ENCODE measurements at regions of chr5 and their contacts with region 1.

Region 1: DNA sequence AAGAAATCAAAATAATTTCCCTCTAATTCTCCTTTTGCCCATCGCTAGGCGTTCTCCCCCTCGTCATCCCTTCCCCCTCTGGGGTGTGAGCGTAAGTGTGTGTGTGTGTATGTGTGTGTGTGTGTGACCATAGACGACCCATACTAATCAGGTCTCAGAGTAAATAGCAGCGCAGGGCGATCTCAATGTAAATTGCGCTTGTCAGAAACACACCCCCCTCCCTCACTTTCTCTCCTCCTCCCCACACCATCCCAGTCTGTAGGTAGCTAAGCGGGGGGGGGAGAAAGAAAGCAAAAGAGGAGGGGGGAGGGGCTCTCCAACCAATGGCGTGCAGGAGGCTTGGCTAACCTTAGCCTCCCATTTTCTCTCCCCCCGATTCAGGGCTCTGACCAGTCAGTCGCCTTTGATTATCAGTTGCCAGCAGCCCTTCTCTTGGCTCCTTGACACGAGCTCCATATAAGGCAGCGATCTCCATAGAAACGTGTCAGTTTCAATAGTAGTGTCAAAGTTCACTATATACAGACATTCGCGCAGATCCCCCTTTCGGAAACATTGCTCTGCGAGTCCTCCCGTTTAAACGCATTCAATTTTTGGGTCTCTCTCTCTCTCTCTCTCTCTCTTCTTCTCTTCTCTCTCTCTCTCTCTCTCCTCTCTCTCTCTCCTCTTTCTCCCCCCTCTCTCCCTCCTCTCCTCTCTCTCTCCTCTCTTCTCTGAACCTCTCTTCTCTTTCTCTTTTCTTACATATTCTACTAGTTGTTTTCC is at the start of gene NR2F1:
- DNase-seq: peak; percentile 98
- ATAC-seq: peak; percentile 55
- H3K4me3 ChIP-seq: peak within 1 kb of the TSS; percentile 70 to 85
- H3K27ac ChIP-seq: peak within 1 kb of the TSS; percentile 99
- H3K4me1 ChIP-seq: peaks cover 20 to 33% of the 10 kb centered on the region in 2 experiments
- H3K27me3 ChIP-seq: no peaks in the 10 kb centered on the region
- CTCF ChIP-seq: no peak; a peak in 1 of 6 replicates
- POLR2A ChIP-seq: no peak
- RAD21 ChIP-seq: no peak; the same call in 1 of the 2 replicates
- total RNA-seq, gene NR2F1: 51.2 TPM

Region 2: GRCh38 chr5:92909602-92909962 is 673.3 kb before region 1 on chr5:
- CTCF ChIA-PET with region 1: no interaction called
- POLR2A ChIA-PET with region 1: no interaction called
- RAD21 ChIA-PET with region 1: no interaction called
- intact Hi-C with region 1: loop called (anchors 5 kb)
- DNase-seq: no peak
- ATAC-seq: peak; percentile 82
- H3K4me3 ChIP-seq: no peak overlapping the region
- H3K27ac ChIP-seq: peak overlapping the region; percentile 68
- H3K4me1 ChIP-seq: peaks cover 26 to 36% of the 10 kb centered on the region in 2 experiments
- H3K27me3 ChIP-seq: no peaks in the 10 kb centered on the region
- CTCF ChIP-seq: peak; percentile 41 to 76 (median 73); a peak in 5 of 6 replicates
- POLR2A ChIP-seq: no peak
- RAD21 ChIP-seq: peak; percentile 60

Region 3: GRCh38 chr5:93164690-93165089 is 418.2 kb before region 1 on chr5:
- CTCF ChIA-PET with region 1: no interaction called
- POLR2A ChIA-PET with region 1: no interaction called
- RAD21 ChIA-PET with region 1: no interaction called
- intact Hi-C with region 1: loop called (anchors 5 kb)
- DNase-seq: peak; percentile 87
- ATAC-seq: 0 out of 2 replicates have a peak, but pooled peaks have one; percentile 28
- H3K4me3 ChIP-seq: no peak overlapping the region
- H3K27ac ChIP-seq: peak overlapping the region; percentile 95
- H3K4me1 ChIP-seq: peaks cover 55 to 62% of the 10 kb centered on the region in 2 experiments
- H3K27me3 ChIP-seq: no peaks in the 10 kb centered on the region
- CTCF ChIP-seq: no peak
- POLR2A ChIP-seq: no peak
- RAD21 ChIP-seq: peak; percentile 28

Region 4: GRCh38 chr5:93385655-93386054 is 197.2 kb before region 1 on chr5:
- CTCF ChIA-PET with region 1: no interaction called
- POLR2A ChIA-PET with region 1: no interaction called
- RAD21 ChIA-PET with region 1: no interaction called
- intact Hi-C with region 1: no loop called
- DNase-seq: no peak
- ATAC-seq: no peak
- H3K4me3 ChIP-seq: no peak overlapping the region
- H3K27ac ChIP-seq: no peak overlapping the region
- H3K4me1 ChIP-seq: no peaks in the 10 kb centered on the region
- H3K27me3 ChIP-seq: no peaks in the 10 kb centered on the region
- CTCF ChIP-seq: no peak
- POLR2A ChIP-seq: no peak
- RAD21 ChIP-seq: no peak

Region 5: GRCh38 chr5:93800988-93801811 is 218.3 kb after region 1 on chr5:
- CTCF ChIA-PET with region 1: interaction called, 27 read pairs
- POLR2A ChIA-PET with region 1: interaction called, 4 read pairs
- RAD21 ChIA-PET with region 1: interaction called in 1 of 2 experiments, 13 read pairs
- intact Hi-C with region 1: loop called (anchors 1 kb)
- DNase-seq: peak; percentile 66
- ATAC-seq: peak; percentile 89
- H3K4me3 ChIP-seq: peak overlapping the region; percentile 4 to 9; a peak in 1 of 4 replicates
- H3K27ac ChIP-seq: peak overlapping the region; percentile 56
- H3K4me1 ChIP-seq: peaks cover 14 to 24% of the 10 kb centered on the region in 2 experiments
- H3K27me3 ChIP-seq: no peaks in the 10 kb centered on the region
- CTCF ChIP-seq: peak; percentile 59 to 72 (median 66); a peak in 5 of 6 replicates
- POLR2A ChIP-seq: no peak
- RAD21 ChIP-seq: peak; percentile 88

Region 6: DNA sequence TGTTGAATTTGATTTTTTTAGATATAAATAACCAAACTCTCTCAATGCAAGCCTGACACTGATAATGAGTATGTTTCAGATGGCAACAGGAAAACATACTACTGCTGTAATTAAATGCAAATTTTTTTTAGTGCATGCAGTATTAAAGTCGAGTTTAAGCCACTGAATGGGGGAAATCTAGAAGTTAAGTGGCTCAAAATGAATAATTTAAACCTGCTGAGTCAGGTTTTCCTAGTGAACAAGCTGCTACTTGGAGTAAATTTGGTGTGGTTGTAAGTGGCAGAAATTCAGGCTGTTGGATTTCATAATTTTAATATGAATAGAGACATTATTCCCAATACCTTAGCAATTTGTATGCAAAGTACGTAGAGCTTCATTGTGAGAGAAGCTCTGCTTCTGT is 1157.4 kb after region 1 on chr5:
- CTCF ChIA-PET with region 1: no interaction called
- POLR2A ChIA-PET with region 1: no interaction called
- RAD21 ChIA-PET with region 1: no interaction called
- intact Hi-C with region 1: loop called (anchors 2 kb)
- DNase-seq: no peak
- ATAC-seq: no peak
- H3K4me3 ChIP-seq: no peak overlapping the region
- H3K27ac ChIP-seq: no peak overlapping the region
- H3K4me1 ChIP-seq: no peaks in the 10 kb centered on the region
- H3K27me3 ChIP-seq: no peaks in the 10 kb centered on the region
- CTCF ChIP-seq: no peak
- POLR2A ChIP-seq: no peak
- RAD21 ChIP-seq: no peak

Measured in HCT116 (cell line).